HCT116 (cell line): ENCODE measurements at regions of chr7 and their contacts with region 1.

Region 1: GRCh38 chr7:131654668-131655326 is 98.4 kb upstream of the PODXL start:
- DNase-seq: peak; percentile 68
- ATAC-seq: peak; percentile 97
- H3K4me3 ChIP-seq: no peak overlapping the region
- H3K27ac ChIP-seq: no peak overlapping the region
- H3K4me1 ChIP-seq: peaks cover 0 to 24% of the 10 kb centered on the region in 2 experiments; a peak in 2 of 4 replicates
- H3K27me3 ChIP-seq: no peaks in the 10 kb centered on the region
- CTCF ChIP-seq: peak; percentile 87 to 94 (median 93)
- POLR2A ChIP-seq: no peak
- RAD21 ChIP-seq: peak; percentile 97

Region 2: GRCh38 chr7:131409129-131409766 is 245.5 kb before region 1 on chr7:
- CTCF ChIA-PET with region 1: no interaction called
- POLR2A ChIA-PET with region 1: no interaction called
- RAD21 ChIA-PET with region 1: no interaction called
- intact Hi-C with region 1: no loop called
- DNase-seq: no peak
- ATAC-seq: no peak
- H3K4me3 ChIP-seq: no peak overlapping the region
- H3K27ac ChIP-seq: no peak overlapping the region
- H3K4me1 ChIP-seq: no peaks in the 10 kb centered on the region
- H3K27me3 ChIP-seq: no peaks in the 10 kb centered on the region
- CTCF ChIP-seq: no peak
- POLR2A ChIP-seq: no peak
- RAD21 ChIP-seq: no peak

Region 3: GRCh38 chr7:131507592-131508331 is 147.0 kb before region 1 on chr7:
- CTCF ChIA-PET with region 1: interaction called, 18 read pairs
- POLR2A ChIA-PET with region 1: no interaction called
- RAD21 ChIA-PET with region 1: no interaction called
- intact Hi-C with region 1: loop called (anchors 1 kb)
- DNase-seq: peak; percentile 44
- ATAC-seq: peak; percentile 89
- H3K4me3 ChIP-seq: no peak overlapping the region
- H3K27ac ChIP-seq: no peak overlapping the region
- H3K4me1 ChIP-seq: peaks cover 0 to 5% of the 10 kb centered on the region in 2 experiments; a peak in 1 of 4 replicates
- H3K27me3 ChIP-seq: no peaks in the 10 kb centered on the region
- CTCF ChIP-seq: peak; percentile 88 to 97 (median 93); a peak in 5 of 6 replicates
- POLR2A ChIP-seq: no peak
- RAD21 ChIP-seq: peak; percentile 95

Region 4: DNA sequence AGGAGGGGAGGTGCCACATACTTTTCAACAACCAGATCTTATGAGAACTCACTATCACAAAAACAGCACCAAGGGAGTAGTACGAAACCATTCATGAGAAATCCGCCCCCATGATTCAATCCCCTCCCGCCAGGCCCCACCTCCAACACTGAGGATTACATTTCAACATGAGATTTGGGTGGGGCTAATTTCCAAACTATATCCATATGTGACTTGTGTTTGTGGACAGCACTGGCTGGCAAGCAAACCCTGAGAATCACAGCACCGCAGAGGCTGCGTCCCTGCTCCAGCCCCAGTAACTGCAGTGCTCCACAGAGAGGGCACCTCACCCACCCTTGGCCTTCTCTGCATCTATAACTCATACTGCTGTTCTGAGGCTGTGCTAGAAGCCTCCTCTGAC is 112.8 kb after region 1 on chr7:
- CTCF ChIA-PET with region 1: no interaction called
- POLR2A ChIA-PET with region 1: no interaction called
- RAD21 ChIA-PET with region 1: no interaction called
- intact Hi-C with region 1: no loop called
- DNase-seq: no peak
- ATAC-seq: no peak
- H3K4me3 ChIP-seq: no peak overlapping the region
- H3K27ac ChIP-seq: no peak overlapping the region
- H3K4me1 ChIP-seq: peaks cover 0 to 7% of the 10 kb centered on the region in 2 experiments; a peak in 2 of 4 replicates
- H3K27me3 ChIP-seq: peaks cover 25% of the 10 kb centered on the region
- CTCF ChIP-seq: no peak
- POLR2A ChIP-seq: no peak
- RAD21 ChIP-seq: no peak